Activated CD4-positive, alpha-beta T cell treated with anti-CD3 and anti-CD28 coated beads for 36 hours (primary cell): ENCODE measurements at regions of chr4 and their contacts with region 1.

Region 1: GRCh38 chr4:38179690-38180377 is 219.6 kb downstream of the PTTG2 start:
- DNase-seq: peak; percentile 84
- ATAC-seq: peak; percentile 55
- H3K4me3 Mint-ChIP-seq: no peak overlapping the region
- H3K27ac Mint-ChIP-seq: no peak overlapping the region
- H3K4me1 Mint-ChIP-seq: peaks cover 37% of the 10 kb centered on the region
- H3K27me3 Mint-ChIP-seq: peaks cover 2% of the 10 kb centered on the region

Region 2: DNA sequence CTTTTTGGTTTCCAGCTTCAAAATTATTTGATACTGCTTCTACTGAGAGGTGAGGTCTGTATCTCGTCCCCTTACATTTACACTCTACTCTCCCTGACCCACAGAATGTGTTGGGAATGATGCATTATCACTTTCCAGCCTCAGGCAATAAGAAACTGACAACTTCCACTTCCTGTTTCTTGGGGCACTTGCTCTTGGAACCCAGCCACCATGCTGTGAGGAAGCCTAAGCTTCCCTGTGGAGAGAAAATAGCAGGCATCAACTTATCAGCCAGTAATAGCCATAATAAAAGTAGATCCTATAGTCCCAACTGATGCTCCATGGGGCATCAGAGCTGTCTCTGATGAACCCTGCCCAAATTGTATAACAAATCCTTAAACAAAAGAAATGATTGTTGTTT is 526.2 kb before region 1 on chr4:
- CTCF ChIA-PET with region 1: no interaction called
- POLR2A ChIA-PET with region 1: no interaction called
- intact Hi-C with region 1: no loop called
- DNase-seq: no peak
- ATAC-seq: no peak
- H3K4me3 Mint-ChIP-seq: no peak overlapping the region
- H3K27ac Mint-ChIP-seq: no peak overlapping the region
- H3K4me1 Mint-ChIP-seq: peaks cover 16% of the 10 kb centered on the region
- H3K27me3 Mint-ChIP-seq: no peaks in the 10 kb centered on the region

Region 3: DNA sequence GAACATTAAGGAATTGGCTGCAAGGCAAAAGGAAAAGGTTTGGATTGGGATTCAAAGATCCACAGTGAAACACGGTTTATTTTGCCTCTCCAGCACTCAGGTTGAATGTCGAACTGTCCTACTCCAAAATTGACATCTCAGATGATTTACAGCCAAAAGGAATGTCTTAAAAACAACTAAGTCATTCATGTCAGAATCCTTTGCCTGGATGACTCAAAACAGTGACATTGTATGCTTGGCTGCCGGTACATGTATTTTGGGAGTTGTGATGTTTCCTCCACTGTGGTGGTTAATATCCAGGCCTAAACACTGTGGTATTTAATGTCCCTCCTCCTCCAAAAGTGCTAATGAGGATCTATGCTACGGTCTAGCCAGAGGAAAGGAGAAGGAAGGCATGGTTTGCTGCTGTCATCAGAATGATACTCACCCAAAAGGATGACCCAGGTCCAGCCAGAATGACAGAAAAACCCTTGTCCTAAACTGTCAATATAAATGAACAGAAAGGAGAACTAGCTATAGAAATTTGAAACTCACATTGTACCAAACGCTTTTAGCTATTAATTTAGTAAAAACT is 332.4 kb before region 1 on chr4:
- CTCF ChIA-PET with region 1: no interaction called
- POLR2A ChIA-PET with region 1: no interaction called
- intact Hi-C with region 1: no loop called
- DNase-seq: no peak
- ATAC-seq: no peak
- H3K4me3 Mint-ChIP-seq: no peak overlapping the region
- H3K27ac Mint-ChIP-seq: no peak overlapping the region
- H3K4me1 Mint-ChIP-seq: no peaks in the 10 kb centered on the region
- H3K27me3 Mint-ChIP-seq: no peaks in the 10 kb centered on the region

Region 4: DNA sequence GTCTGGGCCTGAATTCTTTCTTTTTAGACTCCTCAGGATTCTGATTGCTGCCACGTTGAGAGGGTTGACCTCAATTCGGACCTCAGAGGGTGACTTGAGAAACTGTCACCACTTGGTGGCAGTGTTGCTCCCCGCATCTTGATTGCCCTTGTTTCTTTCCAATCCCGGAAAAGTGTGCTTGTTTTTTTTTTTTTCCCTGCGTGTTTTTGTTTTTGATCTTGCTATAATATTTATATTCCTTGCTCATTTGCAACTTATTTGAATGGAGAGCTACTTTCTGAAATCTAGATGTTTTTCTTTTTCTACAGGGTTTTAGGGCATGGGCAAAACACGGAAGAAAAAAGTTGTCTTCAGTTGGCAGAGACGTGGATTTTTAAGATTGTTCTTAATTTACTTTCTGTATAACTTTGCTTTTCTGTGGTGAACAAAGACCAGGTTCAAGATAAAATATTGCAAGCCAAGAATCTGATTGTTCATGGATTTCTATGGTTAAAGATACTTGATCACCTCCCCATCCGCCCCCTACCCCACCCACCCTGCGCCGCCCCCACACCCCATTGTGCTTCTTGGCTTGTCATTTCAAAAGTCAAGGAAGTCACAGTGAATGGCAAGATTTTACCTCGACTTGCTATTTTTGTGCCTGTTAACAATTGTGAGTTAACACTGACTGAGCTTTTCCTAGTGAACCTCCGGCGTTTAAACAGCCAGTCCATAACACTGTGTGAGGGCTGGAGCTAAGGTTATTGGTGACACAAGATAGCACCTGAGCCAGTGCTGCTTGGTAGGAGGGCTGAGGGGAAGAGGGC is 117.5 kb before region 1 on chr4:
- CTCF ChIA-PET with region 1: interaction called, 26 read pairs
- POLR2A ChIA-PET with region 1: no interaction called
- intact Hi-C with region 1: loop called (anchors 1 kb)
- DNase-seq: peak; percentile 82
- ATAC-seq: peak; percentile 79
- H3K4me3 Mint-ChIP-seq: peak overlapping the region; percentile 75
- H3K27ac Mint-ChIP-seq: peak overlapping the region; percentile 87
- H3K4me1 Mint-ChIP-seq: peaks cover 14% of the 10 kb centered on the region
- H3K27me3 Mint-ChIP-seq: no peaks in the 10 kb centered on the region

Region 5: GRCh38 chr4:38160487-38161207 is 19.2 kb before region 1 on chr4:
- CTCF ChIA-PET with region 1: interaction called, 10 read pairs
- POLR2A ChIA-PET with region 1: no interaction called
- intact Hi-C with region 1: no loop called
- DNase-seq: peak; percentile 69
- ATAC-seq: peak; percentile 79
- H3K4me3 Mint-ChIP-seq: no peak overlapping the region
- H3K27ac Mint-ChIP-seq: peak overlapping the region; percentile 73
- H3K4me1 Mint-ChIP-seq: peaks cover 70% of the 10 kb centered on the region
- H3K27me3 Mint-ChIP-seq: no peaks in the 10 kb centered on the region

Region 6: DNA sequence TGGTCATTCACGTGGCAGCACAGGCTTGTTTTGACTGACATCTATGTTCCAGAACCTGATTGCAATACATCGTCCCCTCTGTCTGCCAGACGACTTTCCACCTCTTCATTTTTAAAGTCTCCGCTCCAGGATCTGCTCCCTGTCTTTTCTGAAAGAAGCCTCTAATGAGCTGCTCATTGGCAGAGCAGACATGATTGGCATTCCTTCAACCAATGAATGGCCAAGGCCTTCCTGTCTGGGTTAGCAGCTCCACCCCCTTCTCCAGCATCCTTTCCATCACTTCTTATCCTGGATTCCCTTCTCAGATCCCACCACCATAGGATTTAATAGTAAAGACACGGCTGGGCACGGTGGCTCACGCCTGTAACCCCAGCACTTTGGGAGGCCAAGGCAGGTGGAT is 281.5 kb after region 1 on chr4:
- CTCF ChIA-PET with region 1: no interaction called
- POLR2A ChIA-PET with region 1: no interaction called
- intact Hi-C with region 1: no loop called
- DNase-seq: no peak
- ATAC-seq: no peak
- H3K4me3 Mint-ChIP-seq: no peak overlapping the region
- H3K27ac Mint-ChIP-seq: no peak overlapping the region
- H3K4me1 Mint-ChIP-seq: peaks cover 14% of the 10 kb centered on the region
- H3K27me3 Mint-ChIP-seq: peaks cover 2% of the 10 kb centered on the region

Region 7: DNA sequence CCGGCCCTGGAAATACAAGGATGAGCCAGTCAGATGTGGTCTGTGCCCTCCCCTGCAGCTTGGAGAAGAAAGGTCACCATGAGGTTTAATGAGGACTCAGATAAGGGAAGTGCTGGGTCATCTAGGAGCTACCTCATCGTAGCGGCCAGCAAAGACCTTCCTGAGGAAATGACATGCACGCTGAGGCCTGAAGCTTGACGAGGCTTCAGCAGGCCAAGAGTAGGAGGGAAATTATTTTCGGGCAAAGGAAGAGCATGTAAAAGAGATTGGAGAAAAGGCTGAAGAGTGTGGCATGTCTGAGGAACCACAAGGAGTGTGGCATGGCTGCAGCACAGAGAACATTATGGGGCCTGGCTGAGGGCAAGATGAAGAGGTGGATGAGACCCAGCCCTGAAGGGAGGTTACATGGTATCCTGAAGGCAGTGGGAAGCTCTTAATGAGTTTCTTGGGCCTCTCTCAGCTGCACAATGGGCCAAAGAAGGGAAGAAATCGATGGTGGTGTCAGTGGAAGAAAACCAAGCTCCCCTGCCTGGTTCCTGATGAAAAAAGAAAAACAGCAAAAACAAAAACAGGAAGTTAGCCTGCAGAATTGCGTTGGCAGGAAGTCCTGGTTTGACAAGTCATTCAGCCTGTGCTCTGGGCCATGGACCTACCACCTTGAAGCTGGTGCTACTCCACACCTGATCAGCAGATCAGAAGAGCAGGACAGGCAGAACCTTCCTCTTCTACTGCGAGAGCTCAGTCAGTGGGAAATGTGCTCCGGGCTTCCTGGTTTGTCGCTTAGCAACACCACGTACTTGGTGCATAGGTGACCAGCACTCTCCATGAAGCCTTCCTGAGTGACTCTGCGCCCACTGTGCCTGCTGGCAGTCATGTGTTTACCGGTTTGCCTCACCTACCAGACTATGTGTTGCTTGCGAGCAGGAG is 349.6 kb after region 1 on chr4:
- CTCF ChIA-PET with region 1: no interaction called
- POLR2A ChIA-PET with region 1: no interaction called
- intact Hi-C with region 1: loop called in 1 of 2 experiments (anchors 10 kb)
- DNase-seq: peak; percentile 80
- ATAC-seq: peak; percentile 96
- H3K4me3 Mint-ChIP-seq: peak overlapping the region; percentile 21
- H3K27ac Mint-ChIP-seq: peak overlapping the region; percentile 83
- H3K4me1 Mint-ChIP-seq: peaks cover 22% of the 10 kb centered on the region
- H3K27me3 Mint-ChIP-seq: no peaks in the 10 kb centered on the region

Region 8: GRCh38 chr4:38675146-38676121 is 495.6 kb after region 1 on chr4:
- CTCF ChIA-PET with region 1: interaction called, 112 read pairs
- POLR2A ChIA-PET with region 1: interaction called, 3 read pairs
- intact Hi-C with region 1: loop called (anchors 1 kb)
- DNase-seq: peak; percentile 91
- ATAC-seq: peak; percentile 55
- H3K4me3 Mint-ChIP-seq: peak overlapping the region; percentile 47
- H3K27ac Mint-ChIP-seq: peak overlapping the region; percentile 30
- H3K4me1 Mint-ChIP-seq: peaks cover 84% of the 10 kb centered on the region
- H3K27me3 Mint-ChIP-seq: no peaks in the 10 kb centered on the region

Region 9: DNA sequence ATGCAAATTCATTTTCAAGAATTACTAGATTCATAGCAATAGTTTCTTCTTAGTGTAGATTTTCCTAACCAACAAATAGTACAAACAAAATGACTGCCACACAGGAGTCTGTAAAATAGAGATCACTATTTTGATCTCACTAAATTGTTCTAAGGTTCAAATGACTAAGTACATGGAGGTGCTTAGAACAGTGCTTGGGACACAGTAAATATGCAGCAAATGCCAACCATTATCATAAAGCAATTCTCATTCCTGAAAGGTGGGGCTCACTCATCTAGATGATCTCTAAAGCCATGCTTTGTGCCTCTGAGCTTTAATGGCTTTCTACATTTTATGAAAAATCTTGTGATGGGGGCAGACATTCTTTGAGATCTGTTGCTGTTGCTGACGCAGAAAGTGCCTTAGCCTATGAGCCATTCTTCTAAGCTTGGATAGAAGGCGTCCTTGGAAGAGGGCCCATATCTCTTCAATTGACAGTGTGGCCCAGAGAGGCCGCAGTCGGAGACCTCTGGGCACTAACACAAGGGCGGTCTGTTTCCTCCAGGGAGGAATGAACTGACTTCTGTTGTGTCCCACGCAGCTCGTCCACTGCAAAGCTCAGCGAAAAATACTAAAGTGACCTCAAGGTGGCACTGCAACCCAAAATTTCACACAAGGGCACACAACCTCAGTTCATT is 579.4 kb after region 1 on chr4:
- CTCF ChIA-PET with region 1: interaction called, 12 read pairs
- POLR2A ChIA-PET with region 1: no interaction called
- intact Hi-C with region 1: no loop called
- DNase-seq: peak; percentile 77
- ATAC-seq: peak; percentile 85
- H3K4me3 Mint-ChIP-seq: no peak overlapping the region
- H3K27ac Mint-ChIP-seq: no peak overlapping the region
- H3K4me1 Mint-ChIP-seq: peaks cover 15% of the 10 kb centered on the region
- H3K27me3 Mint-ChIP-seq: no peaks in the 10 kb centered on the region